ENCODE measurements at regions of chr10 and their contacts with region 1.

Region 1: DNA sequence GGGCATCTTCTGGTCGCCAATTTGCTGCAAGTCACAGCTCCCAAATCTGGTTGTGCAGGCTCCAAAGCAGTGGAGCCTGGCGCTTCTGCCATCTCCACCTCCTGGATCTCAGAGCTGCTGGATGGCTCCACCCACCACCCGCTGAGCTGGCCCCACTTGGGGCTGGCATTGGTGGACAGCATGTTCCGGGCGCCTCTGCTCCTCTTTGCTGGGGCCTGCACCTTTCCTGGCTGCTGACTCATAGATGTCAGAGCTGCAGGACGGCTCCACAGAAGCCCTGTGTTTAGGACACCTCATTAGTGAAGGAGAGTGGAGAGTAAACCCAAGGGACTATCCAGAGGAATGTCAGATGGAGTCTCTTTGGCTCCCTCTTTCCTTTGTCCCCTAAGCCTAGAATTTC is 27.4 kb downstream of the MAPK8 start:
- DNase-seq: peak; percentile 57
- ATAC-seq: peak; percentile 99
- H3K4me3 ChIP-seq: peak overlapping the region in 1 of 2 experiments; percentile 8; a peak in 1 of 4 replicates
- H3K27ac ChIP-seq: peak overlapping the region; percentile 53
- H3K4me1 ChIP-seq: peaks cover 30 to 36% of the 10 kb centered on the region in 2 experiments
- H3K27me3 ChIP-seq: no peaks in the 10 kb centered on the region
- CTCF ChIP-seq: no peak
- POLR2A ChIP-seq: no peak
- RAD21 ChIP-seq: no peak

Region 2: GRCh38 chr10:48358162-48358561 is 24.3 kb after region 1 on chr10:
- CTCF ChIA-PET with region 1: no interaction called
- POLR2A ChIA-PET with region 1: no interaction called
- RAD21 ChIA-PET with region 1: no interaction called
- intact Hi-C with region 1: loop called (anchors 1 kb)
- DNase-seq: no peak
- ATAC-seq: no peak
- H3K4me3 ChIP-seq: no peak overlapping the region
- H3K27ac ChIP-seq: no peak overlapping the region
- H3K4me1 ChIP-seq: no peaks in the 10 kb centered on the region
- H3K27me3 ChIP-seq: no peaks in the 10 kb centered on the region
- CTCF ChIP-seq: no peak
- POLR2A ChIP-seq: no peak
- RAD21 ChIP-seq: no peak

Region 3: GRCh38 chr10:48369555-48369954 is 35.7 kb after region 1 on chr10:
- CTCF ChIA-PET with region 1: no interaction called
- POLR2A ChIA-PET with region 1: no interaction called
- RAD21 ChIA-PET with region 1: no interaction called
- intact Hi-C with region 1: no loop called
- DNase-seq: no peak
- ATAC-seq: no peak
- H3K4me3 ChIP-seq: no peak overlapping the region
- H3K27ac ChIP-seq: no peak overlapping the region
- H3K4me1 ChIP-seq: no peaks in the 10 kb centered on the region
- H3K27me3 ChIP-seq: no peaks in the 10 kb centered on the region
- CTCF ChIP-seq: no peak
- POLR2A ChIP-seq: no peak
- RAD21 ChIP-seq: no peak